ENCODE measurements at regions of chr14 and their contacts with region 1.

Region 1: GRCh38 chr14:54509546-54510501 is at the start of gene CGRRF1:
- DNase-seq: peak; percentile 98 to 99
- H3K4me3 ChIP-seq: peak within 1 kb of the TSS; percentile 57
- H3K4me3 Mint-ChIP-seq: peak within 1 kb of the TSS; percentile 96
- H3K27ac Mint-ChIP-seq: peak within 1 kb of the TSS; percentile 92
- H3K4me1 ChIP-seq: no peaks in the 10 kb centered on the region
- H3K4me1 Mint-ChIP-seq: peaks cover 8% of the 10 kb centered on the region
- H3K27me3 ChIP-seq: no peaks in the 10 kb centered on the region
- H3K27me3 Mint-ChIP-seq: peaks cover 2% of the 10 kb centered on the region
- CTCF ChIP-seq: peak; percentile 58 to 78
- total RNA-seq, gene CGRRF1: 12.0 and 12.3 TPM in 2 replicates

Region 2: GRCh38 chr14:54488646-54489317 is 21.0 kb before region 1 on chr14 and contains the start of gene GMFB:
- CTCF ChIA-PET with region 1: interaction called, 6 read pairs
- POLR2A ChIA-PET with region 1: interaction called, 10 read pairs
- intact Hi-C with region 1: loop called (anchors 2 kb)
- DNase-seq: peak; percentile 92
- H3K4me3 ChIP-seq: peak within 1 kb of the TSS; percentile 86
- H3K4me3 Mint-ChIP-seq: peak within 1 kb of the TSS; percentile 74
- H3K27ac Mint-ChIP-seq: peak within 1 kb of the TSS; percentile 78
- H3K4me1 ChIP-seq: peaks cover 24% of the 10 kb centered on the region
- H3K4me1 Mint-ChIP-seq: peaks cover 18% of the 10 kb centered on the region
- H3K27me3 ChIP-seq: no peaks in the 10 kb centered on the region
- H3K27me3 Mint-ChIP-seq: no peaks in the 10 kb centered on the region
- CTCF ChIP-seq: peak in 1 of 2 experiments; percentile 57
- total RNA-seq, gene GMFB: 65.5 and 67.4 TPM in 2 replicates

Region 3: DNA sequence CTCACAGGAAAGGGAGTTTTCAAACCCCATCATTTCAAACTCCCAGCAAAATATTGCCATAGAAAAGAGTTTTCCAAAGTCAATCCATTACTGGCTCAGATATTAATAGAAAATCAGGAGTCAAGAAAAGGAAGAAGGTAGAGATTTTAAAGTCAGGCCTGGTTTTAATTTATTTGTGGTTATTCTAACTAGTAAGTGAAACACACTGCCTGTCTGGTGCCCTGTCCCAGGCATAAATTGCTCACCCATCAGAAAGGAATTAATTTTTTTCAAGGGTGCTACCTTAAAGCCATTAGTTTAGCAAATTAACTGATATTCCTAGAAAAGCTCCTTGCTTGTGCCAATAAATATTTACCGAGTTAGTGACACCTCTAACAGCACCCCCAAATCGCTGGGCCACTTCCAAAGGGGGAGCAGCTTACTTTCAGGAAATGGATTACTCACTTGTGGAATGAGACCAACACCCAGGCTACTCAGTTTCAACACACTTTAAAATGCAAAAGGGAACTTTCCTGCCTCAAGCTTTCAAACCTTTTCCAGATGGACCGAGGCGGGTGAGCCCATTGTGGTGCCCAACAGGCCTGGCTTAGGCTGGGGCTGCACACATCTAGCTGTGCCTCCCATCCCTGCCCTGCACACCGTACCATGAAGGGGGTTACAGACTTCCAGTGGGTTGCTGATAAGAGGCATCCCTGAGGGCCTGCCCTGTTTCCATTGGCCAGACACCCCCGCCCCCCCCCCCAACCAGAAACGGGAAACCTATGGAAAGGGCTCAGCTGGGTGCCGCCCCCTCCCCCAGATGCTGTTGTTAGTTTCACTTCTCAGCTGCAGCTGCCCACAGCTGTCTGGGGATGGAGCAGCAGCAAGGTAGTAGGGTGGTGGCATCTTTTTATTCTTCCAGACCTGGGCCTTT is 174.3 kb after region 1 on chr14:
- CTCF ChIA-PET with region 1: no interaction called
- POLR2A ChIA-PET with region 1: no interaction called
- intact Hi-C with region 1: no loop called
- DNase-seq: no peak
- H3K4me3 ChIP-seq: no peak overlapping the region
- H3K4me3 Mint-ChIP-seq: no peak overlapping the region
- H3K27ac Mint-ChIP-seq: peak overlapping the region; percentile 42
- H3K4me1 ChIP-seq: no peaks in the 10 kb centered on the region
- H3K4me1 Mint-ChIP-seq: no peaks in the 10 kb centered on the region
- H3K27me3 ChIP-seq: no peaks in the 10 kb centered on the region
- H3K27me3 Mint-ChIP-seq: no peaks in the 10 kb centered on the region
- CTCF ChIP-seq: no peak

Region 4: GRCh38 chr14:54773171-54773975 is 263.5 kb after region 1 on chr14:
- CTCF ChIA-PET with region 1: interaction called, 14 read pairs
- POLR2A ChIA-PET with region 1: no interaction called
- intact Hi-C with region 1: loop called (anchors 1 kb)
- DNase-seq: peak; percentile 72 to 81
- H3K4me3 ChIP-seq: no peak overlapping the region
- H3K4me3 Mint-ChIP-seq: peak overlapping the region; percentile 12
- H3K27ac Mint-ChIP-seq: peak overlapping the region; percentile 30
- H3K4me1 ChIP-seq: peaks cover 5% of the 10 kb centered on the region; the same call in 1 of the 2 replicates
- H3K4me1 Mint-ChIP-seq: peaks cover 12% of the 10 kb centered on the region
- H3K27me3 ChIP-seq: no peaks in the 10 kb centered on the region
- H3K27me3 Mint-ChIP-seq: no peaks in the 10 kb centered on the region
- CTCF ChIP-seq: peak; percentile 18 to 54

Region 5: GRCh38 chr14:54805521-54806322 is 295.9 kb after region 1 on chr14:
- CTCF ChIA-PET with region 1: interaction called, 5 read pairs
- POLR2A ChIA-PET with region 1: no interaction called
- intact Hi-C with region 1: loop called (anchors 5 kb)
- DNase-seq: peak; percentile 75 to 85
- H3K4me3 ChIP-seq: no peak overlapping the region
- H3K4me3 Mint-ChIP-seq: no peak overlapping the region
- H3K27ac Mint-ChIP-seq: no peak overlapping the region
- H3K4me1 ChIP-seq: 0 out of 2 replicates have a peak, but pooled peaks cover 3% of the 10 kb centered on the region
- H3K4me1 Mint-ChIP-seq: no peaks in the 10 kb centered on the region
- H3K27me3 ChIP-seq: peaks cover 1% of the 10 kb centered on the region; the same call in 1 of the 2 replicates
- H3K27me3 Mint-ChIP-seq: no peaks in the 10 kb centered on the region
- CTCF ChIP-seq: peak; percentile 87 to 96

Measured in Caco-2 (cell line).